ENCODE measurements at regions of chrX and their contacts with region 1.

Region 1: DNA sequence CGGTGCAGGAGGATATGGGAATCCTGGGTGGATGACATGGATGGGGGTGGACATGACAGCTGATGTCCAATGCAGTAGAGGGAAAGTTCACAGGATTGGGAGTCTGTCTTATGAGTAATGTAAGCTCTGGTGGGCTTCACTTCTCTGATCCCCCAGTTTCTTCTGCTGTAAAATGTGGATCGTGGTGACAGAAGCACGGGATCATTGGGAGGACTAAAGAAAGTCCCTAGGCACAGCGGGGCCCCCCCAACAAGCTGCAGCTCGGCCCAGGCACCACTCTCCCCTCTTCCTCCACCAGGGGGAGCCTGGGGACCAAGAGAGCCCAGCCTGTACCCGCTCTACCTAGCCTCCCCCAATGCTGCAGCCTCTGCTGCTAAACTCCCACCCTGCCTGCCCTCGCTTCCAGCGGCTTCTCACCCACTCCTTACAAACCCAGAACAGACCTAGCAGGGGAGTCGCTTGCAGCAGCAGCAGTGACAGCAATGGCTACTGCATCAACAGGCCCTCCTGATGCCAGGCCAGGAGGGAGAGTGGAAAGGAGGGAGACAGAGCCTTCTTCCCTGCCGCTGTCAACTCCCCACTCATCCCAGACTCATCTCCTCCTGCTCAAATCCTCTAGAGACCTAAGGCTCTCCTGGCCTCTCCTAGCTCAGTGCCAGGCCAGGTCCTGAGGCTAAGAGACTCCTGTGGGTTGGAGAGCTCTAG is 36.1 kb upstream of the IQSEC2 start:
- DNase-seq: peak; percentile 47 to 79 (median 73)
- H3K4me3 ChIP-seq: no peak overlapping the region
- H3K27ac ChIP-seq: no peak overlapping the region
- H3K4me1 ChIP-seq: peaks cover 0 to 31% (median 22%) of the 10 kb centered on the region in 4 experiments
- H3K27me3 ChIP-seq: peaks cover 0 to 60% (median 24%) of the 10 kb centered on the region in 5 experiments

Region 2: GRCh38 chrX:53160297-53160984 is 157.1 kb before region 1 on chrX:
- CTCF ChIA-PET with region 1: no interaction called
- POLR2A ChIA-PET with region 1: no interaction called
- DNase-seq: no peak
- H3K4me3 ChIP-seq: no peak overlapping the region
- H3K27ac ChIP-seq: no peak overlapping the region
- H3K4me1 ChIP-seq: peaks cover 0 to 5% (median 1%) of the 10 kb centered on the region in 4 experiments
- H3K27me3 ChIP-seq: peaks cover 0 to 8% (median 0%) of the 10 kb centered on the region in 5 experiments

Region 3: GRCh38 chrX:53190363-53190960 is 127.1 kb before region 1 on chrX:
- CTCF ChIA-PET with region 1: no interaction called
- POLR2A ChIA-PET with region 1: no interaction called
- DNase-seq: no peak
- H3K4me3 ChIP-seq: no peak overlapping the region
- H3K27ac ChIP-seq: no peak overlapping the region
- H3K4me1 ChIP-seq: no peaks in the 10 kb centered on the region
- H3K27me3 ChIP-seq: no peaks in the 10 kb centered on the region

Region 4: DNA sequence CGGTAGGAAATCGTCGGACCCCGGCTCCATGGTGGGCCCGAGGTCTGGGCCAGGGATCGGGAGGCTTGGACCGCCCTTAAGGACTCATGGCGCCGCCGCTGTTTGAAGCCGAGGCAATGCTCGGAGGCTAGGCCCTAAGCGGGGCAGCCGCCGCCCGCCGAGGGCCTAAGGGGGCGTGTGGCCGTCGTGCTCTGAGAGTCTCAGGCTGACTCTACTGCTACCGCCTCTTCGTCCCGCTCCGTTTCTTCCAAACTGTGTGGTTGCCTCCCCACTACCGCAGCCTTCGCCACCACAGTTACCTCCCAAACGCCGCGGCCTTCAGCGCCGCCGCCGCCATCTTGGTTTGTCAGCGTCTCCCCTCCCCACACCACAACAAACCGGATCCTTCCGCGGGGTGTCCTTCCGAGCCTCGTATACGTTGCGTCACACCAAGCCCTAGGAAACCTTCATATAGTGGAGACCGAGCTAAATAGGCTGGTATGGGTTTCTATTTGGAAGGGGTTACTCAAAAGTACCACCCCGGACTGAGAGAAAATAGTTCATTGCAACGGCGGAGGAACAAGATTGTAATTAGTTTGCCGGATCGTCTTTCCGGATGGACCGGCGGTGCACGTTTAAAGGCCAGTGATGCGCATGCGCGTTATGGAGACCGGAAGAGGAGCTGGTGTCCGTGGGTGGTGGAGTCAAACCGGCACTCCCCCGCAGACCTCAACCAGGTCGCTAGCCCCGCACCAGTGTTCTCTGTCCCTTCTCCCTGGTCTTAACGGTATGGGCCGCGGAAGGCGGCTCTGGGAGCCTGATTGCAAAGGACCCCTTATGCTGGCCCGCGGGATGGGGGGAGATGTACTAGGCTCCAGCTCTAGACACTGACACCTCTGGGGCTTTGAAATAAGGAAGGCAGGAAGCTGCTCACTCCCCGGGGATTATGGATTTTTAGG is 92.4 kb before region 1 on chrX and contains the start of gene KDM5C:
- CTCF ChIA-PET with region 1: no interaction called
- POLR2A ChIA-PET with region 1: no interaction called
- DNase-seq: peak; percentile 89 to 98 (median 97)
- H3K4me3 ChIP-seq: peak within 1 kb of the TSS; percentile 65 to 97 (median 91)
- H3K27ac ChIP-seq: peak within 1 kb of the TSS; percentile 98 to 99
- H3K4me1 ChIP-seq: peaks cover 17 to 40% (median 30%) of the 10 kb centered on the region in 4 experiments
- H3K27me3 ChIP-seq: peaks cover 0 to 4% (median 0%) of the 10 kb centered on the region in 5 experiments

Region 5: DNA sequence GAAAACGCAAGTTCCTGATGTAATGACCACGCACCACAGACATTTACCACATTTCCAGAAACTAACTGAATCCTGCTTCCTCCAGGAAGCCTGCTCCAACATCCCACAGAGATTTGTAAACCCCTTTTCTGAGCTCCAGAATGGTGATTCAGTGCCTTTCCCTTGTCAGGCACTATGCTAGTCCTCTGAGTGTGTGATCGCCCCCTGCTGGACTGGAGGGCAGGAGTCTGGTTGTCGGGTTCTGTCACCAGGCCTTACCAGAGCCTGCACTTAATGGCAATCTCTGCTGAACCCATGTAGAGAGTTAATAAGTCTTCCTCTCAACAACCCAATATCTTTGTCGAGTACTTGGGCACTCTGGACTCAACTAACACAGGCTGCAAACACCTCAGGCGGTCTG is 78.0 kb before region 1 on chrX:
- CTCF ChIA-PET with region 1: no interaction called
- POLR2A ChIA-PET with region 1: no interaction called
- DNase-seq: peak in 2 of 3 donors; percentile 42 to 43
- H3K4me3 ChIP-seq: no peak overlapping the region
- H3K27ac ChIP-seq: no peak overlapping the region
- H3K4me1 ChIP-seq: no peaks in the 10 kb centered on the region
- H3K27me3 ChIP-seq: peaks cover 0 to 35% (median 0%) of the 10 kb centered on the region in 5 experiments

Region 6: DNA sequence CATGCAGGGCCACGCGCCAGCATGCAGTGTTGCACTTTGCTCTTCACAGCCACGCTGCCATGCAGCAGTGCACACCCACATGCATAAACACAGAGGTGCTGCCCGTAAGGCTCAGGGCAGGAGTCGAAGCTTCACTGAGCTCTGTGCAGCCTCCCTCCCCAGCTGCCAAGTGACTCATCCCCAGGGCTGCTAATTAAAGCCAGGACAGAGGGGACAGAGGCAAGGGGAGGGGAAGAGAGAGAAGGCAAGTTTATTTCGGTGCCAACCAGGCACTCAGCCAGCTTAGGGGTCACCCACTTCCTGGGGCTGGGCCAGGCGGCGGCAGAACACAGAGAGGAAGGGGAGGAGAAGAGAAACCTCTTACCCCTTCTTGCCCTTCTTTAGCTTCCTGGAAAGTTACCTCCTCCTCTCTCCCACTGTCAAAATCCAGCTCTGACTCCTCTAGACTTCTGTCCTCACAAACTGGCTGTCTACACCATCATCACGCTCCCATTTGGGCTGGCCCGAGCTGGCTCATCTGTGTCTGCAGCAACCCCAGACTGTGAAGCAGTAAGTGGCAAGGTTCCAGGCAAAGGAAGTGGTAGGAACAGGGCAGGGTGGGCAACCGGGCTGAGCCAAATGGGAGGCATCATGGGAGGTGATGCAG is 29.9 kb before region 1 on chrX:
- CTCF ChIA-PET with region 1: interaction called, 12 read pairs
- POLR2A ChIA-PET with region 1: no interaction called
- DNase-seq: peak; percentile 71 to 92 (median 88)
- H3K4me3 ChIP-seq: peak overlapping the region in 5 of 7 experiments; percentile 9 to 58 (median 41)
- H3K27ac ChIP-seq: no peak overlapping the region
- H3K4me1 ChIP-seq: peaks cover 0 to 36% (median 20%) of the 10 kb centered on the region in 4 experiments
- H3K27me3 ChIP-seq: peaks cover 0 to 22% (median 0%) of the 10 kb centered on the region in 5 experiments

Region 7: GRCh38 chrX:53294024-53294648 is 23.4 kb before region 1 on chrX:
- CTCF ChIA-PET with region 1: interaction called, 16 read pairs
- POLR2A ChIA-PET with region 1: interaction called, 3 read pairs
- DNase-seq: peak in 2 of 3 donors; percentile 50 to 56
- H3K4me3 ChIP-seq: no peak overlapping the region
- H3K27ac ChIP-seq: no peak overlapping the region
- H3K4me1 ChIP-seq: no peaks in the 10 kb centered on the region
- H3K27me3 ChIP-seq: peaks cover 0 to 20% (median 0%) of the 10 kb centered on the region in 5 experiments

Region 8: DNA sequence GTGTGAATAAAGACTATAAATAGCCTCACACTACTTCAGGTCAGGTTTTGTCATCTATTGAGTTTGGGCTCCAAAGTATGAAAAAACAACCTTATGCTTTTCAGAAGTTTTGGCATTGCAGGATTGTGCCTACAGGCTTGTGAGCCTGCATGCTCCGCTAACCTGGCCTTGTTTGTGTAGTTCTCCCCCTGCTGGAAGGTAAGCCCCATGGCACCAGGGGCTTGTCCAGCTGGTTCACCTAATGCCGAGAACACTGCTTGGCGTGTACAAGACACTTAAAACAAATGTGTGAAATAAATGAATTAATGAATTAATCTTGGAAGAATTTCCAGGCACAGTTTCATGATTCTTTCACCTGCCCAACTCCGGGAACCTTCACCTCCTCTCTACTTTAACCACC is 118.5 kb after region 1 on chrX:
- CTCF ChIA-PET with region 1: interaction called, 24 read pairs
- POLR2A ChIA-PET with region 1: interaction called, 4 read pairs
- DNase-seq: peak; percentile 69 to 90 (median 89)
- H3K4me3 ChIP-seq: no peak overlapping the region
- H3K27ac ChIP-seq: no peak overlapping the region
- H3K4me1 ChIP-seq: peaks cover 4 to 23% (median 10%) of the 10 kb centered on the region in 4 experiments
- H3K27me3 ChIP-seq: peaks cover 0 to 42% (median 3%) of the 10 kb centered on the region in 5 experiments

Region 9: DNA sequence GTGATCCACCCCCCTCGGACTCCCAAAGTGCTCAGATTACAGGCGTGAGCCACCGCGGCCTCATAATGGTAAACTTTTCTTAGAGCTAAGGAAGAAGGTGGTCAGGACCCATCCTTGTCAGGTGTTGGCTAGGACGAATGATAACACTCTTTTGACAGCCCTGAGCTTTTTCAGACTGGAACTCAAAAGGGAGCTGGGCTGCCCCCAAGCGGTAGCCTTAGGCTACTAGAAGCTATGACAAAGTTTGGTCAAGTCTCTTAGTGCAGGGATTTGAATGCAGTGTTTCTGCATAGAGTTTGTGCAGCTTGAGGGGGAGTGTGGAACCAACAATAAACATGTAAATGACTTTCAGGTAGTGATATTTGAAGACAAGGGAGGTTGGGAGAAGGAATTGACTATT is 128.5 kb after region 1 on chrX:
- CTCF ChIA-PET with region 1: interaction called, 30 read pairs
- POLR2A ChIA-PET with region 1: interaction called, 3 read pairs
- DNase-seq: peak in 2 of 3 donors; percentile 51 to 67
- H3K4me3 ChIP-seq: no peak overlapping the region
- H3K27ac ChIP-seq: no peak overlapping the region
- H3K4me1 ChIP-seq: peaks cover 0 to 15% (median 13%) of the 10 kb centered on the region in 4 experiments
- H3K27me3 ChIP-seq: peaks cover 0 to 42% (median 0%) of the 10 kb centered on the region in 5 experiments

Region 10: DNA sequence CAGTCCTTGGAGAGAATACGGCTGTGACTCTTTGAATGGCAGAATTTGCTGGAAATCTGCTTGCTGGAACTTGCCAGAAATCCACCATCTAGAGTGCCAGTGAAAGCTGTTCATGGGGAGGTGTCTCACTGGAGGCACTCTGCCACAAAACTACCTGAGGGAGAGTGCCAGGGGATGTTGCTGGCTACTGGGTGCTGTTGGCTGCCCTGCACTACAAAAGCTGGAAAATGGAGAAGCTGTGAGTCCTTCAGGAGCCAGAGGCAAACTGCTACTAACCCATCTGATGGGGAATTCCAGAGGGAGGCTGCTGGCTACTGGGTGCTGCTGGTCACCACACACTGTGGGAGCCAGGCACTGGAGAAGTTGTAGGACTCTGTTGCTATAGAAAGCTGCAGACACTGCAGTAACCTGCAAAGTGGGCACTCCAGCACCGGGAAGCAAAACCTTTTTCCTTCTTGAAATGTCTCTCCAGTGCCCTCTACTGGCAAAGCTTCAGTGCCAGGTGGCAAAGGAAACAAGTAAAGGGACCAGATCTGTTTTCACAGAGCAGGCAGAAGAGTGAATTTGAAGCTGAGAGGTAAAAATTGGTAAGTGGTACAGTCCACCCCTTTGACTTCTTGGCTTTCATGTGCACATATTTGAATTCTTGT is 164.4 kb after region 1 on chrX:
- CTCF ChIA-PET with region 1: interaction called, 33 read pairs
- POLR2A ChIA-PET with region 1: no interaction called
- DNase-seq: peak; percentile 58 to 81 (median 73)
- H3K4me3 ChIP-seq: no peak overlapping the region
- H3K27ac ChIP-seq: no peak overlapping the region
- H3K4me1 ChIP-seq: peaks cover 0 to 3% (median 0%) of the 10 kb centered on the region in 4 experiments
- H3K27me3 ChIP-seq: peaks cover 0 to 6% (median 0%) of the 10 kb centered on the region in 5 experiments